ENCODE measurements at regions of chr1 and their contacts with region 1.

Region 1: DNA sequence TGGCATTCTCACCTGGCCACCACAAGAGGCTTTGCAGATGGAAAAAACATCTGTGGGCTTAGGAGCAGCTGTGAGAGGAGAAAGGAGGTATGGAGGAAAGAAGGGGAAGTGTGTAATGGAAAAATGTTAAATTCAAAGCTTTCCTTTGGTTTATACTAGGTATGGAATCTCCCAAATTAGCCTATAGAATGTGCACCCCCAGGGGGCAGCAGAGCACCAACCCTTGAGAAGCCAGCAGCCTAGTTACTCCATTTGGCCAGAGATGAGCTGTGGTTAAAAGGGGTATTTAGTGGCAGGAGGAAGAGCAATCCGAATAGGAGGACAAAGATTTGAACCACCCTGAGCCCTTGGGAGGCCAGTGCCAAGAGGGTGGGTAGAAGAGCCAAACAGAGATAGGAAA is 97.5 kb upstream of the CTTNBP2NL start:
- DNase-seq: peak; percentile 65
- H3K4me3 Mint-ChIP-seq: no peak overlapping the region
- H3K27ac Mint-ChIP-seq: no peak overlapping the region
- H3K4me1 Mint-ChIP-seq: no peaks in the 10 kb centered on the region
- H3K27me3 Mint-ChIP-seq: peaks cover 11% of the 10 kb centered on the region

Region 2: GRCh38 chr1:112165375-112165774 is 133.2 kb before region 1 on chr1:
- CTCF ChIA-PET with region 1: no interaction called
- intact Hi-C with region 1: no loop called
- DNase-seq: no peak
- H3K4me3 Mint-ChIP-seq: no peak overlapping the region
- H3K27ac Mint-ChIP-seq: no peak overlapping the region
- H3K4me1 Mint-ChIP-seq: no peaks in the 10 kb centered on the region
- H3K27me3 Mint-ChIP-seq: peaks cover 11% of the 10 kb centered on the region

Region 3: DNA sequence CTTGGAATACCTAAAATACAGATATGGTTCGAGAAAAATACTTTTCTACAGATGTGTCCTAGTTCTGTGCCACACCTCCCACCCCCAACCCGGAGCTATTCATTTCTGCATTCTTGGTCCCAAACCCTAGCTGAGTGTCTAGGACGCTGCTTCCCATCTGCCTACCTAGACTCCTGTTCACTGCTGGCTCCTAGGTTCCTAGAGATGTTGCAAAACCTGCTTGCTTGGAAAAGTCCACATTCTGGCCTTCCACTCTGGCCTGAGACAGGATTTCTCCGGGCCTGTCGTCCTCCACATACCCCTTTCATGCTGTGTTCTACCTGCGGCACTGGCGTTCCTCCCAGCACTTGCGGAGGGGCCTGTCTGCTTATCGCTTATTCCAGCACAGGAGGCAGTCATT is 68.3 kb before region 1 on chr1:
- CTCF ChIA-PET with region 1: no interaction called
- intact Hi-C with region 1: no loop called
- DNase-seq: no peak
- H3K4me3 Mint-ChIP-seq: no peak overlapping the region
- H3K27ac Mint-ChIP-seq: no peak overlapping the region
- H3K4me1 Mint-ChIP-seq: no peaks in the 10 kb centered on the region
- H3K27me3 Mint-ChIP-seq: peaks cover 2% of the 10 kb centered on the region

Region 4: DNA sequence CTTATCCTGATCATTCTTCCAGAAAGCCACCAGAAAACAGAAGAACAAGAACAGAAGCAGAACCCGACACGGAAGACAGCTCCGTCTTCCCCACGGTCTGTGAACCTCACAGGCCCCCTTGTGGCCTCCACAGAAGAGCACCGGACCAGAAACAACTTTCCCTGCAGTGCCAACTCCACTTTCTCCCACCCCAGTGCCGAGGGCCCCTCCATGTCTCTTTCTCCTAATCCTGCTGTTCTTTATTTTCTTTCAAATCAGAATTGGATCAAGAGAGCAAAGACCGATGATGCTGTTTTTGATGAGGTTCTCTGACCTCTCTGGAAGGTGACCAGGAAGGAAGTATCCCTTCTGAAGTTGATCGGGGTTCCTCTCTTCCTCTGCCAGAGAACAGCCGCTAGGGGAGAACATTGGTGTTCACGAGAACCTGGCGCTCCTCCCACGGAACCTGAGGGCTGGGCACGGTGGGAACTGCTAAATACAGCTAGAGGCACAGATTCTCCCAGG is 38.5 kb after region 1 on chr1:
- CTCF ChIA-PET with region 1: interaction called, 13 read pairs
- intact Hi-C with region 1: no loop called
- DNase-seq: peak; percentile 19
- H3K4me3 Mint-ChIP-seq: peak overlapping the region; percentile 19
- H3K27ac Mint-ChIP-seq: no peak overlapping the region
- H3K4me1 Mint-ChIP-seq: peaks cover 6% of the 10 kb centered on the region
- H3K27me3 Mint-ChIP-seq: peaks cover 12% of the 10 kb centered on the region